Dendritic cell treated with granulocyte-macrophage colony-stimulating factor and Interleukin-4, amounts not matched to agents 40 ng/mL and 50 ng/mL, for 4 days (primary cell): ENCODE measurements at regions of chr5 and their contacts with region 1.

Region 1: DNA sequence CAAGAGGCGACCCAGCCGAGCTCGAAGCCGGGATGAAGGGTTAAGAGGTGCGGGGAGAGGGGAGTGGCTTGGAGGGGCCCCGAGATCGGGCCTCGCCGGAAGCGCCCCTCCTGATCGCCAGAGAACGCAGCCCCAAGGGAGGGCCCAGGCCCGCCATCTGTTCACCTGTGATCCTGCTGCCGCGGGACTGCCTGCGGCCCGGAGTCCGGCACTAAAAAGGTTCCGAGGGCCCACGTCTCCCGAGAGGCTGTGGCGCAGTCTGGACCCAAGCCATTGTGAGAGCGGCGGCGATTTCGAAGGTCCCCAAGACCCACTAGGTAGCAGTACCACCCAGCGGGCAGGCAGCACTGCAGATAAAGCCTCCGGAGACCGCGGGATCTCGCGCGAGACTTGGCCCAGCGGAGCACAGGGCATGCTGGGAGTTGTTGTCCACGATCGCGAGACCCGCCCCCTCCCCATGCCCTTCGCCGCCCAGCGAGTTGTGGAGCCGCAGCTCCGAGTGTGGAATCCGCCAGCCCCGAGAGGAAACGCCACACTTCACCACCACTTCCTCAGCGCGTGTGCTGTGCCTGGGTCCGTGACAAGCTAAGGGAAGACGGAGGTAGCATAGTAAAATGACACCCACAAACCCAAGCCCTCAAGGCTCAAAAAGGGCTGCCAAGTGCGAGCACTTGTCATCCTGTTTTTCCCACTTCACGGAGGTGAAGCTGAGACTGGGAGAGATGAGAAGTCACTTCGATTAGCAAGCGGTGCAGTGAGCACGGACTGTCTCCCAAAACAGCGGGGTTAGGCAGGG is at the start of gene KIAA1191:
- H3K4me3 Mint-ChIP-seq: peak within 1 kb of the TSS; percentile 96
- H3K27ac Mint-ChIP-seq: peak within 1 kb of the TSS; percentile 90
- H3K4me1 Mint-ChIP-seq: peaks cover 28% of the 10 kb centered on the region
- H3K27me3 Mint-ChIP-seq: peaks cover 26% of the 10 kb centered on the region

Region 2: GRCh38 chr5:176388444-176389134 is 27.0 kb after region 1 on chr5 and contains the starts of genes HIGD2A and NOP16:
- intact Hi-C with region 1: loop called (anchors 1 kb)
- H3K4me3 Mint-ChIP-seq: peak within 1 kb of the TSS; percentile 100
- H3K27ac Mint-ChIP-seq: peak within 1 kb of the TSS; percentile 100
- H3K4me1 Mint-ChIP-seq: peaks cover 77% of the 10 kb centered on the region
- H3K27me3 Mint-ChIP-seq: no peaks in the 10 kb centered on the region